B cell (primary cell): ENCODE measurements at regions of chr2 and their contacts with region 1.

Region 1: GRCh38 chr2:201151127-201151981 is 31.6 kb upstream of the CASP10 start:
- DNase-seq: peak; percentile 63
- ATAC-seq: peak; percentile 58
- H3K4me3 ChIP-seq: no peak overlapping the region
- H3K4me3 Mint-ChIP-seq: peak overlapping the region; percentile 42
- H3K27ac ChIP-seq: peak overlapping the region; percentile 74 to 85
- H3K27ac Mint-ChIP-seq: peak overlapping the region; percentile 89
- H3K4me1 ChIP-seq: peaks cover 34 to 39% of the 10 kb centered on the region in 2 donors
- H3K4me1 Mint-ChIP-seq: peaks cover 55% of the 10 kb centered on the region
- H3K27me3 ChIP-seq: no peaks in the 10 kb centered on the region
- H3K27me3 Mint-ChIP-seq: no peaks in the 10 kb centered on the region
- CTCF ChIP-seq: no peak

Region 2: GRCh38 chr2:200950378-200950777 is 201.0 kb before region 1 on chr2:
- CTCF ChIA-PET with region 1: no interaction called
- POLR2A ChIA-PET with region 1: no interaction called
- intact Hi-C with region 1: no loop called
- DNase-seq: no peak
- ATAC-seq: no peak
- H3K4me3 ChIP-seq: no peak overlapping the region
- H3K4me3 Mint-ChIP-seq: no peak overlapping the region
- H3K27ac ChIP-seq: no peak overlapping the region
- H3K27ac Mint-ChIP-seq: no peak overlapping the region
- H3K4me1 ChIP-seq: no peaks in the 10 kb centered on the region
- H3K4me1 Mint-ChIP-seq: no peaks in the 10 kb centered on the region
- H3K27me3 ChIP-seq: no peaks in the 10 kb centered on the region
- H3K27me3 Mint-ChIP-seq: no peaks in the 10 kb centered on the region
- CTCF ChIP-seq: no peak

Region 3: GRCh38 chr2:201171259-201171814 is 20.0 kb after region 1 on chr2:
- CTCF ChIA-PET with region 1: no interaction called
- POLR2A ChIA-PET with region 1: no interaction called
- intact Hi-C with region 1: loop called (anchors 2 kb)
- DNase-seq: no peak
- ATAC-seq: no peak
- H3K4me3 ChIP-seq: no peak overlapping the region
- H3K4me3 Mint-ChIP-seq: no peak overlapping the region
- H3K27ac ChIP-seq: no peak overlapping the region
- H3K27ac Mint-ChIP-seq: no peak overlapping the region
- H3K4me1 ChIP-seq: peaks cover 12 to 20% of the 10 kb centered on the region in 2 donors
- H3K4me1 Mint-ChIP-seq: peaks cover 27% of the 10 kb centered on the region
- H3K27me3 ChIP-seq: no peaks in the 10 kb centered on the region
- H3K27me3 Mint-ChIP-seq: no peaks in the 10 kb centered on the region
- CTCF ChIP-seq: no peak

Region 4: DNA sequence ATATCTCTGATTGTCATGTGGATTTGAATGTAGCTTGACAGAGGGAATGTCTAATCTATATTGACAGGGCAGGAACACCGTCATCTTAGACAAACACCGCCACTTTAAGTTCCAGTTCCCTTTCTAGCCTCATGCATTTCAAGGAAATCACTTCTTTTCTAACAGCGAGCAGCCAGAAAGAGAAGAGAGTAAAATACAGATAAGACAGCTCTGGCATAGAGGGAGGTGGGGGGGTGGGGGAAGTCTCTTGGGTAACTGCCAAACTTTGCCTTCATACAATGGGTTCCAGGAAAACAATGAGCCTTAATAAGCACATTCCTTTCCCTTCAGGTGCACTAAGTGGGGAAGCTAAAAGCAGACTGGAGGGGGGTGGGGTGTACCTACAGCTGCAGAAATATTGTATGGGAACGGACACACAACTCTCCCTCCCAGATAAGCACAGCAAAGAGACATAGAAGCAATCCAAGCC is 68.8 kb after region 1 on chr2:
- CTCF ChIA-PET with region 1: no interaction called
- POLR2A ChIA-PET with region 1: no interaction called
- intact Hi-C with region 1: no loop called
- DNase-seq: peak; percentile 51
- ATAC-seq: peak; percentile 31
- H3K4me3 ChIP-seq: no peak overlapping the region
- H3K4me3 Mint-ChIP-seq: no peak overlapping the region
- H3K27ac ChIP-seq: peak overlapping the region in 1 of 2 donors; percentile 6
- H3K27ac Mint-ChIP-seq: peak overlapping the region; percentile 12
- H3K4me1 ChIP-seq: peaks cover 12 to 27% of the 10 kb centered on the region in 2 donors
- H3K4me1 Mint-ChIP-seq: peaks cover 38% of the 10 kb centered on the region
- H3K27me3 ChIP-seq: no peaks in the 10 kb centered on the region
- H3K27me3 Mint-ChIP-seq: no peaks in the 10 kb centered on the region
- CTCF ChIP-seq: no peak

Region 5: GRCh38 chr2:201950606-201951005 is 799.3 kb after region 1 on chr2:
- CTCF ChIA-PET with region 1: no interaction called
- POLR2A ChIA-PET with region 1: no interaction called
- intact Hi-C with region 1: no loop called
- DNase-seq: no peak
- ATAC-seq: no peak
- H3K4me3 ChIP-seq: no peak overlapping the region
- H3K4me3 Mint-ChIP-seq: no peak overlapping the region
- H3K27ac ChIP-seq: no peak overlapping the region
- H3K27ac Mint-ChIP-seq: no peak overlapping the region
- H3K4me1 ChIP-seq: no peaks in the 10 kb centered on the region
- H3K4me1 Mint-ChIP-seq: no peaks in the 10 kb centered on the region
- H3K27me3 ChIP-seq: no peaks in the 10 kb centered on the region
- H3K27me3 Mint-ChIP-seq: peaks cover 26% of the 10 kb centered on the region
- CTCF ChIP-seq: no peak